Posterior vena cava (tissue), 2 donors: ENCODE measurements at regions of chr18 and their contacts with region 1.

Region 1: DNA sequence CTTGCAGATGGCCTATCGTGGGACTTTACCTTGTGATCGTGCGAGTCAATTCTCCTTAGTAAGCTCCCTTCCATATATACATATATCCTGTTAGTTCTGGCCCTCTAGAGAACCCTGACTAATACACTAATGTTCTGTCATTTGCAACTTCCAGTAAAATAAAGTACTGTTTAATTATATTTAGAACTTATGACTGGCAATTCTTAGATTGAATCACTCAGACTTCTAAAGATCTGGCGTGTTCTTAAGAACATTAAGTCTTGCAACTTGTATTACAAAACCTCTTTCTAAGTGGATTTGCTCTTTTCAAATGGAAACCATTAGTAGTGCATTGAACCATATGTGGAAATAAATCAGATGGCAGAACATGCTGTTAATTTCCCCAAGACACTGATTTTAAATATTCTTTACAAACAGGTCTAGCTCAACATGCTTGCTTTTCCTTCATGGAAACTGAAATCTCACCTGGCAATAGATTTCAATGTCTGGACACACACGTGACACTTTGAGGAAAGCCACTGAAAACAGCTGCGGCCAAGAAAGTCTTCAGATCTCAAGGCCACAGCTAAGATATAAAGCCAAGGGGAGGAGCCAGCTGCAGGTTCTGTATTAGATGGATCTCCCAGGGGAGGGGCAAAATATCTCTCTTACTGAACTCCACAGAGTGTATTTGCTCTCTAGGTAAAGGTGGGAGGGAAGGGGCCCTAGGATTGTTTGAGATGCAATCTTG is 50.6 kb downstream of the PMAIP1 start:
- DNase-seq: no peak

Region 2: DNA sequence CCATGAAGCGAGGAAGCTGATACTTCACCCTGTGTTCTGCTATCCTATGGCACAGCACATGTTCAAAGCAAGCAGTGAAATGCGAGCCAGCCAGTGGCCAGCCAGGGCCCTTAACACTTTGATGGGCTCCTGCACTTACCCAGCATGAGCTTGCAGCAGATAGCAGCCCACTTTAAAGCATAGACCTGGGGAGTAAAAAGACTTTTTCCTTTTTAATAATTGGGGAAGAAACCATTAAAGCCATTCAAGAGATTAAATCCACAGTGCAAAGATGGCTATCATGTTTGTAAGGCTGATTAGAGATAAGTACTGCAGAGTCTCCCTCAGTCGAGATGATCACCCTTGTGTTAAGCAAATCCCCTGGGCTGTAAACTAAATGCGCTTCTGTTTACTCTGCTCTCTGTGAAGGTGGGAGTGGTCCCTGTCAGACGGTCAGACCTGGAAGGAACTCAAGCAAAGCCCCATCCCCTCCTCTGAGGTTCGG is 268.8 kb before region 1 on chr18:
- intact Hi-C with region 1: loop called in 1 of 2 experiments (anchors 5 kb)
- DNase-seq: no peak

Region 3: DNA sequence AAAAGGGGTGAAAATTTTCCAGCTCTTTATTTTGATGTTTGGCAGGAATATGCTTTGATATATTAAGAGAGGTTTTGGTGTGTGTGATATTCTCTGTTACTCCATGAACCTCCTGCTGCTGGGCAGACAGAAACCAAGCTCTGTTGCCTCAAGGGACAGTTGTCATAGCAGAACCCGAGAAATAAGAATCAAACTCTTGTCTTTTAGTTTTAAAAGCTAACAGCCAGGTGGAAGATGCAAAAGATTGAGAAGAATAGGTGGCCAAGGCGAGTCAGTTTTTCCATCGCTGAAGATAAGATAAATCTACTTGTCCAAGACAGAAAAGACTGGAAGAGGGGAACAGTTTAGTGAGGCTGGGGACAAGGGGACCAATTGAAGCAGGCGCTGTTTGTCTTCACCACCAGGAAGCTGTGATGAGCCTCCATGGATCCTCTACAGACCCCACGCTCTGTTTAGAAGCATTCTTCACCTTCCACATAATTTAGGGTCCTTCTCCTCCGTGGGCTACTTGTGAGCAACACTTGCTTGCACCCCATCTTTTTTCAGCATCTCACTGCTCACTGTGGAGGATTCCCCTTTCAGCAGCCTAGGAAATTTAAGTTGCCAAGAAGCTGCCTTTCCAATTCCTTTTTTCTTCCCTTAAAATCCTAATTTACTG is 26.7 kb before region 1 on chr18:
- intact Hi-C with region 1: loop called in 1 of 2 experiments (anchors 1 kb)
- DNase-seq: no peak